GM12878 (cell line): ENCODE measurements at regions of chr2 and their contacts with region 1.

Region 1: GRCh38 chr2:30711646-30712085 is 95.6 kb downstream of the CAPN13 start:
- DNase-seq: peak; percentile 59
- ATAC-seq: peak; percentile 72
- H3K4me3 ChIP-seq: no peak overlapping the region
- H3K27ac ChIP-seq: no peak overlapping the region
- H3K4me1 ChIP-seq: peaks cover 13% of the 10 kb centered on the region
- H3K27me3 ChIP-seq: no peaks in the 10 kb centered on the region
- CTCF ChIP-seq: peak; percentile 100; a peak in 5 of 6 replicates
- EP300 ChIP-seq: no peak
- POLR2A ChIP-seq: no peak
- RAD21 ChIP-seq: peak; percentile 96

Region 2: DNA sequence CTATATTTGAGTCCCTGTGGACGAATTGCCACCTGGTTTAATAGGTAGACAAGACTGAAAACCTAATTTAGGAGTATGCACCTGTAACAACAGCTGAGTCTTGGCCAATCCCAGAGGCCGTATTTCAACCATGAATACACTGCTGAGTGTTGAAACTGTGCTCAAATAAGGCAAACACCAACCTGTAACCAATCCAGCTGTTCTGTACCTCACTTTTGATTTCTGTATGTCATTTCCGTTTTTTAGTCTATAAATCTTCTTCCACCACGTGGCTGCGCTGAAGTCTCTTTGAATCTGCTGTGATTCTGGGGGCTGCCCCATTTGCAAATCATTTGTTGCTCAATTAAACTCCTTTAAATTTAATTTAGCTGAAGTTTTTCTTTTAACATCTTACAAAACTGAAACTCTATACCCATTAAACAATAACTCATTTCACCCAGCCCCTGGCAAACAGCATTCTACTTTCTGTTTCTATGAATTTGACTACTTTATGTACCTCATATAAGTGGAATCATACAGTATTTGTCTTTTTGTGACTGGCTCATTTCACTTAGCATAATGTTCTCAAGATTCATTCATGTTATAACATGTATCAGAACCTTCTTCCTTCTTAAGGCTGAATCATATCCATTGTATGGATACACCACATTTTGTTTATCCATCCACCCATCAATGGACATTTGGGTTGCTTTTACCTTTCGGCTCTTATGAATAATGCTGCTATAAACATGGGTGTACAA is 572.4 kb before region 1 on chr2:
- CTCF ChIA-PET with region 1: interaction called, 10 read pairs
- POLR2A ChIA-PET with region 1: no interaction called
- RAD21 ChIA-PET with region 1: no interaction called
- SMC1A ChIA-PET with region 1: interaction called, 6 read pairs
- in situ Hi-C with region 1: no loop called
- intact Hi-C with region 1: no loop called
- DNase-seq: no peak
- ATAC-seq: peak; percentile 89
- H3K4me3 ChIP-seq: no peak overlapping the region
- H3K27ac ChIP-seq: no peak overlapping the region
- H3K4me1 ChIP-seq: 0 out of 2 replicates have a peak, but pooled peaks cover 3% of the 10 kb centered on the region
- H3K27me3 ChIP-seq: no peaks in the 10 kb centered on the region
- CTCF ChIP-seq: no peak; a peak in 1 of 6 replicates
- EP300 ChIP-seq: no peak
- POLR2A ChIP-seq: no peak
- RAD21 ChIP-seq: 0 out of 2 replicates have a peak, but pooled peaks have one; percentile 16

Region 3: GRCh38 chr2:30201990-30202389 is 509.7 kb before region 1 on chr2:
- CTCF ChIA-PET with region 1: interaction called, 334 read pairs
- POLR2A ChIA-PET with region 1: no interaction called
- RAD21 ChIA-PET with region 1: interaction called, 195 read pairs
- SMC1A ChIA-PET with region 1: interaction called, 137 read pairs
- in situ Hi-C with region 1: loop called (anchors 5 kb)
- intact Hi-C with region 1: no loop called
- DNase-seq: no peak
- ATAC-seq: no peak
- H3K4me3 ChIP-seq: no peak overlapping the region
- H3K27ac ChIP-seq: no peak overlapping the region
- H3K4me1 ChIP-seq: no peaks in the 10 kb centered on the region; the same call in 1 of the 2 replicates
- H3K27me3 ChIP-seq: no peaks in the 10 kb centered on the region; a peak in 1 of 4 replicates
- CTCF ChIP-seq: no peak
- EP300 ChIP-seq: no peak
- POLR2A ChIP-seq: no peak
- RAD21 ChIP-seq: no peak

Region 4: DNA sequence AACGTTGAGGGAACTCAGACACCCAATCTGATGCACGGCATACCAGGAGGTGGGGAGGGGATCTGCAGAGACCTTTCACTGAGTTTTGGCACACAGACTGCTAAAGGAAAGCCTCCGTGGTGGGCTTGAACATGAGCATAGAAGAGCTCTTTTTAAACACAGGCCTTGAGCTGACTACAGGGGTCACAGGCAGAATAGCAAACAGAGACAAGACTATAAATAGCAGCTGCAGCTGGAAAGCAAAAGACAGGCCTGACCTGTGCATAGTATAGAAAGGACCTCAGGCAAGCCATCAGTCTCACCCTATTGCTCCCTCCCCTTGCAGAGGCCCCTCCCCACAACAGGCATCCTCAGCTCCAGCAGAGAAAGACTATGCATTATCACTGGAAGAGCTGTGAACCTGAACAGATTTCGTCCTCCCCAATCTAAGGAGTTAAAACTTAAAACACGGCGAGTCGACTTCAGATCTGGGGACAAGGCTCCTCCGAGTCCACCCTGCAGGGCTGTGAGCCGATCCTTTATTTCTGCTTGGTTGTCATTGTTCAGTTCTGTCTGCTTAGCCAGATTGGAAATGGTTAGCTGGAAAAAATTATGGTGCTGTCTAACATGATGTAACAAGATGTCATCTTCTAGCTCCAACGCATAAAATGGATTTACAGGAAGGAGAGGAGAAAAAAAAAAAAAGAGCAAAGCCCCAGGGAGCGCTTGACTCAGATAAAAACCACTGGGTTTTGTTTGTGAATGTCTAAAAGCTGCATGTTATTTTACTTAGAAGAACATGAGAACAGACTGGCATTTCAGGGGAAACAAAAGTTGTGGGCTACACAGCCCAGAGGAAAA is 289.8 kb before region 1 on chr2:
- CTCF ChIA-PET with region 1: interaction called, 4 read pairs
- POLR2A ChIA-PET with region 1: no interaction called
- RAD21 ChIA-PET with region 1: interaction called, 5 read pairs
- SMC1A ChIA-PET with region 1: interaction called, 4 read pairs
- in situ Hi-C with region 1: no loop called
- intact Hi-C with region 1: loop called (anchors 10 kb)
- DNase-seq: peak; percentile 28
- ATAC-seq: peak; percentile 77
- H3K4me3 ChIP-seq: 0 out of 2 replicates have a peak overlapping the region, but pooled peaks have one; percentile 17
- H3K27ac ChIP-seq: peak overlapping the region; percentile 6; the same call in 1 of the 2 replicates
- H3K4me1 ChIP-seq: peaks cover 25% of the 10 kb centered on the region
- H3K27me3 ChIP-seq: no peaks in the 10 kb centered on the region
- CTCF ChIP-seq: no peak
- EP300 ChIP-seq: no peak
- POLR2A ChIP-seq: no peak
- RAD21 ChIP-seq: no peak

Region 5: DNA sequence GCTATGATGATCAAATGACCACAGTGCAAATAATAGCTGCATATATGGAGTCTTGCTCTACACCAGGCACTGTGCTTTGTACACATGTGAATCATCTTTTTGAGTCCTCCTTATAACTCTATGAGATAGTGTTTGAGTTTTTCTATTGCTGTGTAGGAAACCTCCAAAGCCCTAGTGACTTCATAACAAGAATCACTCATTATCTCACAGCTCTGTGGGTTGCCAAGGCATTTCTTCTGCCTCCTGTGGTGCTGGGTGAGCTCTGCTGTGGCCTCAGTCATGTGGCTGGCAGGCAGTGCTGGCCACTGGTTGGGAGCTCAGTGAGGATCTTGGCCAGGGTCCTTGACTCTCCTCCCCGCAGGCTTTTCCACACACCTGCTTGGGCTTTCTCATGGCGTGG is 57.8 kb before region 1 on chr2:
- CTCF ChIA-PET with region 1: interaction called, 10 read pairs
- POLR2A ChIA-PET with region 1: no interaction called
- RAD21 ChIA-PET with region 1: no interaction called
- SMC1A ChIA-PET with region 1: interaction called, 3 read pairs
- in situ Hi-C with region 1: no loop called
- intact Hi-C with region 1: no loop called
- DNase-seq: no peak
- ATAC-seq: peak; percentile 31; the same call in 2 of the 3 replicates
- H3K4me3 ChIP-seq: no peak overlapping the region
- H3K27ac ChIP-seq: no peak overlapping the region
- H3K4me1 ChIP-seq: no peaks in the 10 kb centered on the region
- H3K27me3 ChIP-seq: no peaks in the 10 kb centered on the region; a peak in 1 of 4 replicates
- CTCF ChIP-seq: no peak
- EP300 ChIP-seq: no peak
- POLR2A ChIP-seq: no peak
- RAD21 ChIP-seq: no peak

Region 6: GRCh38 chr2:31000970-31001369 is 289.3 kb after region 1 on chr2:
- CTCF ChIA-PET with region 1: no interaction called
- POLR2A ChIA-PET with region 1: no interaction called
- RAD21 ChIA-PET with region 1: no interaction called
- SMC1A ChIA-PET with region 1: no interaction called
- in situ Hi-C with region 1: no loop called
- intact Hi-C with region 1: no loop called
- DNase-seq: no peak
- ATAC-seq: no peak
- H3K4me3 ChIP-seq: no peak overlapping the region
- H3K27ac ChIP-seq: no peak overlapping the region
- H3K4me1 ChIP-seq: no peaks in the 10 kb centered on the region
- H3K27me3 ChIP-seq: no peaks in the 10 kb centered on the region; a peak in 1 of 4 replicates
- CTCF ChIP-seq: no peak
- EP300 ChIP-seq: no peak
- POLR2A ChIP-seq: no peak
- RAD21 ChIP-seq: no peak

Region 7: DNA sequence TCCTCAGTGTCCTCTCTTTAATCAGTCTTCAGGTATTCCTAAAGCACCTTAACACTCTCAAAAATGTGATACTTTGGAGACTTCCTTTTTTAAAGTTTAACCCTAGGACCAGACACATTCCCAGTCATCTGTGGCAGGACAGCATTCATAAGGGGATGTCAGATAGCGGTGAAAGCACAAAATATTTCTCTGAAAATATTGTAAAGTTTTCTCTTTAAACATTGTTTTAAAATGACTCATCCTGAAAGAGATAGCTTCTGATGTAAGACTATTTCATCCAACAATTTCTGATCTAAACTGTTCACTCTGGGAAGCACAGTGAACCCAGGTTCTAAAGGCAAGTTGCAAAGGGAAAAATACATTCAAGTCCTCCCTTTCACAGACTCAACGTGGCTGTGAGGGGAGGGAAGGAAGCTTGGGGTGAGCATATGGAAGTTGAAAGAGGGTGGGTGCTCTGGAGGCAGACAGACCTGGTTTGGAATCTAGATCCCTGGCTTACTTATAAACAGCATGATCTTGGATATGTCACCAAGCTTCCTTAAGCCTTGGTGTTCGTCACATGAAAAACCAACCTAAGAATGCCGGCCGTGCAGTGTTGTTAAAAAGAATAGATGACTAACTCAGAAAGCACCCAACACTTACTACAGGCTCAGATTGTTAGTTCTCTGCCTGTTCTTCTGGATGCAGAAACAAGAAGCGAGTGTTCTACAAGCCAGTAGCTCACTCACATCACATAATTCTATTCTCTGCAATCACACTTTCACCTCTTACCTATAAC is 414.4 kb after region 1 on chr2:
- CTCF ChIA-PET with region 1: no interaction called
- POLR2A ChIA-PET with region 1: no interaction called
- RAD21 ChIA-PET with region 1: no interaction called
- SMC1A ChIA-PET with region 1: no interaction called
- in situ Hi-C with region 1: no loop called
- intact Hi-C with region 1: no loop called
- DNase-seq: no peak
- ATAC-seq: no peak
- H3K4me3 ChIP-seq: no peak overlapping the region
- H3K27ac ChIP-seq: no peak overlapping the region
- H3K4me1 ChIP-seq: no peaks in the 10 kb centered on the region
- H3K27me3 ChIP-seq: no peaks in the 10 kb centered on the region
- CTCF ChIP-seq: no peak
- EP300 ChIP-seq: no peak
- POLR2A ChIP-seq: no peak
- RAD21 ChIP-seq: no peak

Region 8: DNA sequence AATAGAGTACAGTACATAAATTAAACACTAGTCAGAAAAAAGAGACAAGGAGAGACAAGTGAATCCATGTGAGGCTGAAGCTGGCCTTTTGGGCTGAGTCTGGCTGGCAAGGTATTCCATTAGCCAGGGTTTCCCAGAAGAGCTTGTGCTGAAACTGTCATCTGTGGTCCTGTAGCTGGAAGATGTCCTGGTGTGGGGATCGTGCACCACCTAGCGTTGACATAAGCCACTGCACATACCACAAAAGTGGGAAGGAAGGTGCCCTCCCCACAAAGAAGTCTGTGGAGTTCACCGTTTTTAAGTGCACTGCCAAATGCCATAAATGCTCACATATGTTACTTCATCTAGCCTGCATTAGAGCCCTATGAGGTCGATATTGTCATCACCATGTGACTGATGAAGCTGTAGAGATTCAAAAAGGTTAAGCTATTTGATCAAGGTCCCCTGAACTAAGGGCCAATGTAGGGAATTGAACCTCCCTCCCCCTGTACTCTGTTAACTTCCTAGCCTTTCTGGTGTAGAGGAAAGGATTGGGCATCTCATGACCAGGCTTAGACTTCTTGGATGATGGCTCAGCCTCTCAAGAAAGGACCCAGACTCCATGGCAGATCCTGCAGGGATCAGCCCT is 458.5 kb after region 1 on chr2:
- CTCF ChIA-PET with region 1: interaction called, 165 read pairs
- POLR2A ChIA-PET with region 1: no interaction called
- RAD21 ChIA-PET with region 1: interaction called, 103 read pairs
- SMC1A ChIA-PET with region 1: interaction called, 71 read pairs
- in situ Hi-C with region 1: loop called (anchors 5 kb)
- intact Hi-C with region 1: loop called (anchors 1 kb)
- DNase-seq: peak; percentile 21
- ATAC-seq: peak; percentile 94
- H3K4me3 ChIP-seq: no peak overlapping the region
- H3K27ac ChIP-seq: no peak overlapping the region
- H3K4me1 ChIP-seq: no peaks in the 10 kb centered on the region
- H3K27me3 ChIP-seq: no peaks in the 10 kb centered on the region
- CTCF ChIP-seq: peak; percentile 93 to 97 (median 95)
- EP300 ChIP-seq: no peak
- POLR2A ChIP-seq: no peak
- RAD21 ChIP-seq: peak; percentile 85